Right ventricle myocardium inferior (tissue), 1 donor: ENCODE measurements at regions of chr17 and their contacts with region 1.

Region 1: DNA sequence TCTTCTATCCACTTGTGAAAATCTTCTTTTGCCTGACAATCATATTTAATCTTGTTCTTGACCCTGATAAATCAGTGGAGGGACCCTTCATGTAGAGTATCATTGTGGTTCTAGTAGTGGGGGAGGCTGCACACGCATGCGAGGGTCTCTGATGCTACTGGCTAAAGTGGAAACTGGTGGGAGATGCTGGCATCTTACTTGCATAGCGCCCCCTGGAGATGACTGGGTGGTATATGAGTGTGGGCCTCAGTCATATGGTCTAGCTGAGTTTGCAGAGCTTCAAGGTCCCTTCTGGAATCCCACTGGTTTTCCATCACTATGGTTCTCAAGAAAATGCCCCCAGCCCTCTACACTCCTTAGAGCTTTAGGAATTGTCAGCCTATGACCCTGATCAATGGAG is 236.4 kb upstream of the AXIN2 start:
- DNase-seq: no peak
- ATAC-seq: no peak

Region 2: GRCh38 chr17:65455972-65456343 is 341.9 kb before region 1 on chr17:
- intact Hi-C with region 1: loop called (anchors 5 kb)
- DNase-seq: no peak
- ATAC-seq: peak; percentile 85